Activated CD4-positive, alpha-beta memory T cell treated with anti-CD3 and anti-CD28 coated beads for 36 hours (primary cell): ENCODE measurements at regions of chr22 and their contacts with region 1.

Region 1: DNA sequence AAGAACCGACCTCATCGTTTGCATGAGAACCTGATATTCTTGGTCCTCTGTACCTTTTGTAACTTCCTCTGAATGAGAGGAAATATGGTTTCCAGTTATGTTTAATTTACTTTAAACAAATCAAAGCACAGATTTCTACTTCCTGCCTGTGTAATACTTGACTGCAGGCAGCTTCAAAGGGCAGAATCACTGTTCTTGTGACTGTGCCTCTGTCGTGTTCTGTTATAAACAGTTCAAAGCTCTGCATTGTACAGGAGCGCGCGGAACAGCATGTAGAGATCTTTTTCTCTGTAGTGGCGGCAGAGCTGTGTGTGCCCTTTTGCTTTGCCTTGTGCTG is 73.2 kb upstream of the CLDN5 start:
- DNase-seq: peak; percentile 45
- H3K4me3 Mint-ChIP-seq: no peak overlapping the region
- H3K27ac Mint-ChIP-seq: peak overlapping the region; percentile 72
- H3K4me1 Mint-ChIP-seq: peaks cover 34% of the 10 kb centered on the region
- H3K27me3 Mint-ChIP-seq: no peaks in the 10 kb centered on the region

Region 2: GRCh38 chr22:19576460-19577421 is 20.6 kb before region 1 on chr22:
- CTCF ChIA-PET with region 1: no interaction called
- POLR2A ChIA-PET with region 1: no interaction called
- intact Hi-C with region 1: loop called (anchors 1 kb)
- DNase-seq: peak; percentile 88
- H3K4me3 Mint-ChIP-seq: peak overlapping the region; percentile 11
- H3K27ac Mint-ChIP-seq: peak overlapping the region; percentile 83
- H3K4me1 Mint-ChIP-seq: peaks cover 45% of the 10 kb centered on the region
- H3K27me3 Mint-ChIP-seq: no peaks in the 10 kb centered on the region